ENCODE measurements at regions of chr20 and their contacts with region 1.

Region 1: GRCh38 chr20:15708984-15709598 is 864.2 kb downstream of the KIF16B start:
- DNase-seq: peak; percentile 74
- ATAC-seq: no peak
- H3K4me3 Mint-ChIP-seq: no peak overlapping the region
- H3K27ac Mint-ChIP-seq: no peak overlapping the region
- H3K4me1 Mint-ChIP-seq: no peaks in the 10 kb centered on the region
- H3K27me3 Mint-ChIP-seq: no peaks in the 10 kb centered on the region

Region 2: DNA sequence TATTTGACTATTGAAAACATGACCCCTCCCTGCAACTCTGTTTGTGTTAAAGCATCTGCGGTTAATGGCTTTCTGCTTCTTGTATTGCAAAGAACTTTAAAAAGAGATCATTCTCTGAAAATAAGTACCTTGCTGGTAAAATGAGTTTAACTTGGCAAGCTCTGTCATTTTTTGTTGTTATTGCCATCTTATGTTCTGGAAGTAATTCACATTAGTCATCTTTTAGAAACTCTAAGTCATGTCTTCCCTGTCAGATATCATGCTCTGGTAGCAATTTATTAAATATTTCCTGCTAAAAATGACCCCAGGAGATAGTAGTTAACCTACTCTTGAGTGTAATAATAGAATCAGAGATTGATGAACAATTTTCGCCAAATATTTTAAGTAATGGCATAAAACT is 26.4 kb before region 1 on chr20:
- CTCF ChIA-PET with region 1: no interaction called
- POLR2A ChIA-PET with region 1: no interaction called
- intact Hi-C with region 1: no loop called
- DNase-seq: no peak
- ATAC-seq: no peak
- H3K4me3 Mint-ChIP-seq: no peak overlapping the region
- H3K27ac Mint-ChIP-seq: no peak overlapping the region
- H3K4me1 Mint-ChIP-seq: no peaks in the 10 kb centered on the region
- H3K27me3 Mint-ChIP-seq: no peaks in the 10 kb centered on the region

Region 3: DNA sequence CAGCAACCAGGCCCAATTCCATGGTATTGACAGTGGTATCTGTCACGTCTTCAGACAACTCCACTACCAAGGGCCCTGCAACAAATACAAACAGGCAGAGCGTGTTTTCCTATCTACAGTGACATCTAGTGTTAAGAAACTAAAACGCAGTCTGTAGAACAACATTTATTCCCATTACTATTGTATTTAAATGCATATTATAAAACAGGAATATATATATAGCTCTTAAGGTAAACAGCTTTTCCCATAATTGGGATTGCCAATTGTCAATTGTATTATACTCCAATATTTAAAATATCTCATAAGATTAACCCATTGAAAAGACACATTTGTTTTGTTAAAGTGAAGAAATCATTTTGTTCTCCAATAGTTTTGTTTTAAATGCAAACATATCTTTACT is 766.9 kb after region 1 on chr20:
- CTCF ChIA-PET with region 1: interaction called, 5 read pairs
- POLR2A ChIA-PET with region 1: no interaction called
- intact Hi-C with region 1: loop called (anchors 2 to 10 kb)
- DNase-seq: no peak
- ATAC-seq: peak; percentile 57
- H3K4me3 Mint-ChIP-seq: no peak overlapping the region
- H3K27ac Mint-ChIP-seq: no peak overlapping the region
- H3K4me1 Mint-ChIP-seq: peaks cover 7% of the 10 kb centered on the region
- H3K27me3 Mint-ChIP-seq: no peaks in the 10 kb centered on the region